Left ventricle myocardium inferior (tissue), 1 donor: ENCODE measurements at regions of chr9 and their contacts with region 1.

Region 1: DNA sequence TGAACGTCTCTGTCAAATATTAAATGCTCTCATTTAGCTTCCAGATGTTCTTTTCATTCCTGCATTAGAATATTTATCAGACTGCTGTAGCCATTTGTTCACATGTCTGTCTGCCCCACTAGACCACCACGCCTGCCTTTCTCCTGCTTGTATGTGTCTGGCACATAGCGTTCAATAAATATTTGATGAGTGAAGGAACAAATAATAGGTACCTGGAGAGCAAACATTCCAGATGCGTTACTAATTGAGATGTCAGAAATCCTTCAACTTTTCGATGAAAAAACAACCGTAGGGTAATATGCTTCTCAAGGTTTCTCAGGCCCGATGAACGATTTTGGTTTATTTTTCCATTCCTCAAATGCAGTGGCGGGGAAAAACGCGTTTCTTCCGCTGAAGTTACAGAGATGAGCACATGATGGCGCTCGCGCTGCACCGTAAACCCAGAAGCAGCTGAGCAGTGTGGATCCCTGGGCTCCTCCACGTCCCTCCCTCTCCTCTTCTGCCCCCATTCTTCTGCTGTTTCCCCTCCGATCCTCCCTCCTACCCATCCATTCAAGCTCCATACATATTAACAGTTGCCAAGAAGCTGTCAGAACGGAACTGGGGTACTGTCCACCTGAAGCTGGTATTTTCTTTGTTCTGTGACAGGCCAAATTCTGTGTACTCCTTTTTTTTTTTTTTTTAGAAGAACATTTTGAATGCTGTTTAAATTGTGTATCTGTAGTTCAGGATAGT is 245.4 kb downstream of the MPDZ start:
- DNase-seq: peak; percentile 45
- H3K4me3 ChIP-seq: peak overlapping the region; percentile 51
- H3K27ac ChIP-seq: no peak overlapping the region
- H3K4me1 ChIP-seq: peaks cover 9% of the 10 kb centered on the region
- H3K27me3 ChIP-seq: no peaks in the 10 kb centered on the region
- CTCF ChIP-seq: peak; percentile 83

Region 2: GRCh38 chr9:13088720-13089427 is 54.7 kb after region 1 on chr9:
- intact Hi-C with region 1: loop called (anchors 10 kb)
- DNase-seq: no peak
- H3K4me3 ChIP-seq: no peak overlapping the region
- H3K27ac ChIP-seq: no peak overlapping the region
- H3K4me1 ChIP-seq: no peaks in the 10 kb centered on the region
- H3K27me3 ChIP-seq: no peaks in the 10 kb centered on the region
- CTCF ChIP-seq: peak; percentile 84